Cardiac septum (tissue), 1 donor: ENCODE measurements at regions of chr1 and their contacts with region 1.

Region 1: GRCh38 chr1:117146570-117147346 is 25.2 kb upstream of the TRIM45 start:
- DNase-seq: no peak

Region 2: DNA sequence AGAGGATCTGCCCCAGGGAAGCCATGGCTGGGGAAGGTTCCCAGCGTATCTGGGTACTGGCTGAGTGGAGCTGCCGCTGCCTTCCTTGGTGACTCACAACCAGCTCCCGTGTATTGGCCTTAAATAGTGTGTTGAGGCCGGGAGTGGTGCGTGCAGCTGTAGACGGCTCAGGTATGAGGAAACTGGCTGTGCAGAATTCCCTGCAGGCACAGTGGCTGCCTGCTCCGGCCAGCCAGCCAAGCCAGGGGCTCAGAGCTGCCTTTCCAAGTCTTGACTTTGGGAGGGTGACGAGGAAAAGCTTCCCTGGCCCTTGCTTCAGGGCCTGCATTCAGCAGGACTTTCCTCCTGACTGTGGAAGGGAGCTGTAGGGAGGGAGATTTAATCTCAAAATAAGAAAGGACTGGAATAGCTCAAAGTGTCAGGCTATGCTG is 64.1 kb after region 1 on chr1 and contains the start of gene VTCN1:
- intact Hi-C with region 1: no loop called
- DNase-seq: no peak
- total RNA-seq, gene VTCN1: not detected

Region 3: GRCh38 chr1:117271571-117272358 is 125.0 kb after region 1 on chr1:
- intact Hi-C with region 1: loop called (anchors 10 kb)
- DNase-seq: no peak